ENCODE measurements at regions of chr4 and their contacts with region 1.

Region 1: GRCh38 chr4:113312529-113312928 is 263.1 kb downstream of the ANK2 start:
- DNase-seq: no peak
- ATAC-seq: no peak

Region 2: DNA sequence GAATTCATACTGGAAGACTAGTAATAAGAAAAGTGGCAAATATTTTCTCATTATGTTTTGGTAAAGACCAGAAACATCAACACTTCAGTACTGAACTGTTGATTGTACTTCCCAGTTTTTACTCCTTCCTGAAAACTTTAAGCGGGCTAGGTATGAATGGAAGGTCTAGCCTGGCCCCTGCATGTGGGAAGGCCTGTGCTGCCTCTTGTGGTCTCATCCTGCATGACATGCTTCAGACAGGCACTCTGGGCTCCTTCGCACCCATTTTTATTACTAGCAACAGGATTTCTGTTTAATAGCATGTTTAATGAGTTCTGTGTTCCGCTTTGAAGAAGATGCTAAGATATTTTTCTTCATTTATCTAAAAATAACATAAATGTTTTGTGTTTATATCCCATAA is 16.0 kb after region 1 on chr4:
- intact Hi-C with region 1: loop called in 1 of 2 experiments (anchors 1 kb)
- DNase-seq: no peak
- ATAC-seq: peak in 1 of 2 donors; percentile 36

Region 3: GRCh38 chr4:113368056-113368455 is 55.5 kb after region 1 on chr4:
- intact Hi-C with region 1: no loop called
- DNase-seq: no peak
- ATAC-seq: no peak